ENCODE measurements at regions of chr3 and their contacts with region 1.

Region 1: DNA sequence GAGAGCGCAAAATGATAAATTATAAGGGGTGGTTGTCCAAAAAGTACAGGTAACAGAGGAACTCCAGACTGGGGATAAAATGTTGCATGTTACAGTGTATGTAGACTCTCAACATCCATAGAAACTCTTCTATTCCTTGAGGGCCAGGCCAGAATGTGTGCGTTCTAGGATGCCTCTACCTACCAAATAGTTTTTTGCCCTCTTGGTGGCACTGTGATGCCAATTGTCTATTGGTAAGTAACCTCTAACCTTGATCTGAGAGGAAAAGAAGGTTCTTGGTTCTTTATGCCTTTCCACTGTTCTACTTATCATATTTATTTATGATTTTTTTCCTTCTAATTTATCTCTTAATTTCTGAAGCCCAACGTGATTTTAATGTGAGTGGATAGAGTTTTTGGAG is 424.6 kb downstream of the GRM7 start:
- DNase-seq: peak; percentile 9
- H3K4me3 ChIP-seq: no peak overlapping the region
- H3K27ac ChIP-seq: no peak overlapping the region
- H3K4me1 ChIP-seq: no peaks in the 10 kb centered on the region
- H3K27me3 ChIP-seq: no peaks in the 10 kb centered on the region
- CTCF ChIP-seq: peak; percentile 20 to 38

Region 2: GRCh38 chr3:7205535-7205934 is 80.0 kb before region 1 on chr3:
- CTCF ChIA-PET with region 1: no interaction called
- dilution Hi-C with region 1: no loop called
- in situ Hi-C with region 1: no loop called
- intact Hi-C with region 1: no loop called
- DNase-seq: peak; percentile 38
- H3K4me3 ChIP-seq: peak overlapping the region; percentile 11 to 38 (median 12)
- H3K27ac ChIP-seq: no peak overlapping the region
- H3K4me1 ChIP-seq: no peaks in the 10 kb centered on the region
- H3K27me3 ChIP-seq: no peaks in the 10 kb centered on the region
- CTCF ChIP-seq: no peak

Region 3: DNA sequence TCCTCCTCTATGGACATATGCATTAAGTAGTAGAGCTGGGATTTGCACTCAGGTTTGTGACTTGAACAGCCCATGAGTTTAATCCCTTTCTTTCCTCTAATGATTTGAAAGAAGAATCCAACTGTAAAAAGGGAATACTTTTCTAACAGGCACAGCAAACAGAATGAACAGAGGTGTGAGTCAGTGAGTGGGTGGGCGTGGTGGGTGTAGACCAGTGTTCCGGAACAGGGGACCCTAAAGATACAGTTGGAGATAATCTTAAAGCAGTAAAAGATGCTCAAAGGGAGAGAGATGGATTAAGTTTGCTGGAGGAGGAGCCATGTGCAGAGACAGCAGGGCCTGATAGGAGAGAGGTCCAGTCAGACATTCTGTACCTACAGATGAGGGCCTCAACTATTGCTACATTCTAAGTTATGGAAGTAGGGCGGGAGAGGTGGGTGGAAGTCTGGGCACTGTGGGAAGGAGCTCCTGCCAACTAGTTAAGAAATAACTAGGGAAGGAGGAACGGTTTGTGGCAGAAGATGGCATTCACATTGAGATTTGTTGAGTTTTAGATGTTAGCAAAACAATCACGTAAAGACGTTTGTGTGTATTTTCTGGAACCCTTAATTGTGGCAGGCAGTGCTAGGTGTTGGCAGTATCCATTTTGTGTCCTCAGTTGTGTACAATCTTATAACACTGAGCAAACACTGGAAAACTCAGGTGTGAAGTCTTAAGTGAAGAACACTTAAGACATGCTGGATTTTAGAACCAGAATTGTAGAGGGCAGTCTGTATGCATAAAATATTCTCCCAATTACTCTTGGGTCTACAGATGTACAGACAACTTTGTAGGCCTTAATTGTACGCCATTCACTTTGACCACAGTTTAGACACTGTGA is 86.4 kb after region 1 on chr3:
- CTCF ChIA-PET with region 1: no interaction called
- dilution Hi-C with region 1: no loop called
- in situ Hi-C with region 1: no loop called
- intact Hi-C with region 1: no loop called
- DNase-seq: no peak
- H3K4me3 ChIP-seq: no peak overlapping the region
- H3K27ac ChIP-seq: no peak overlapping the region
- H3K4me1 ChIP-seq: no peaks in the 10 kb centered on the region
- H3K27me3 ChIP-seq: no peaks in the 10 kb centered on the region
- CTCF ChIP-seq: no peak

Region 4: DNA sequence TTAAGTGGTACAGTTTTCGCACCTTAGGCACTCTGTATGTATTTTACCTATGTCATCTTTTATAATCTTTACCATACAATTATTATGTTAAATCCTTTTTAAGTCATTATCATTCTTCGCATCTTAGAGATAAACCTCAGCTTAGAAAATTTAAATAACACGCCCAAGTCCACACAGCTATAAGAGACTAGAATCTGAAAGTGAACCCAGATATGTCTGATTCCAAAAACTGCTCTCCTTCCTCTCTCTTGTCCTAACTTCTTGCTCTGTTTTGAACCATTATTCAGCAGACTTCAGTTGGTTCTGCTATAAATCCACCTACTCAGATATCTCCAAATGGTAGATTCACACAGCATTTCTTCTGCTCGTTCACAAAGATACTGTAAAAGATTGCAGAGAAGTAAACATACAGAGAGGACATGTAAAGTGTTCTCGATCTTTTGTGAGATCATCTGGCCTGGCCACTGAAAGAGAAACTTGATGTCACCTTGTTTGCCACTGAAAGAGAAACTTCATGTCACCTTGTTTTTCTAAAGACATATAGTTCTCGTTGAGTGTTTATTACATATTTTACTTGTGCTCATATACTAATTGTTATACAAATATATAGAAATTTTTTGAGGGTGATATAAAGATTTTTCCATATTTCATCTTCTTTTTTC is 108.6 kb after region 1 on chr3:
- CTCF ChIA-PET with region 1: no interaction called
- dilution Hi-C with region 1: no loop called
- in situ Hi-C with region 1: no loop called
- intact Hi-C with region 1: no loop called
- DNase-seq: no peak
- H3K4me3 ChIP-seq: no peak overlapping the region
- H3K27ac ChIP-seq: no peak overlapping the region
- H3K4me1 ChIP-seq: no peaks in the 10 kb centered on the region
- H3K27me3 ChIP-seq: no peaks in the 10 kb centered on the region
- CTCF ChIP-seq: no peak

Region 5: DNA sequence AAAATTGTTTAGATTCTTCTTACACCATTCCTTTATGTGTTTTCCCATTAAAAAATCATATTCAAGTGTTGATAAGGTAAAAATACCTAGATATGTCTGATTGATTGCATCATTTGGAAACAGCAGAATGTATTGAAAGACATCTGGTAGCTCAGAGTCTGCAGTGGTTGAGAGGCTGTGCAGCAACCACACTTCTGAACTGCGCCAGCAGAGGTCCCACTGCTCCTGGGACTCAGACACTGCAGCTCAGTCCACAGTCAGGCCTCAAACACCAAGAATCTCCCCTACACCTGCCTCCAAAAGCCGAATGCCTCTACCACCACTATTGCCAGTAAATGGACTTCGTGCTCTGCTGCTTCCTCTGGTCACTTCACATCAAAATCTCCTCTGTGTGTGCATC is 1039.2 kb after region 1 on chr3:
- CTCF ChIA-PET with region 1: no interaction called
- dilution Hi-C with region 1: no loop called
- in situ Hi-C with region 1: no loop called
- intact Hi-C with region 1: loop called (anchors 10 kb)
- DNase-seq: peak; percentile 13
- H3K4me3 ChIP-seq: no peak overlapping the region
- H3K27ac ChIP-seq: no peak overlapping the region
- H3K4me1 ChIP-seq: peaks cover 10% of the 10 kb centered on the region
- H3K27me3 ChIP-seq: peaks cover 2% of the 10 kb centered on the region
- CTCF ChIP-seq: peak; percentile 50 to 70

Measured in mammary epithelial cell (primary cell).